ENCODE measurements at regions of chr17 and their contacts with region 1.

Region 1: DNA sequence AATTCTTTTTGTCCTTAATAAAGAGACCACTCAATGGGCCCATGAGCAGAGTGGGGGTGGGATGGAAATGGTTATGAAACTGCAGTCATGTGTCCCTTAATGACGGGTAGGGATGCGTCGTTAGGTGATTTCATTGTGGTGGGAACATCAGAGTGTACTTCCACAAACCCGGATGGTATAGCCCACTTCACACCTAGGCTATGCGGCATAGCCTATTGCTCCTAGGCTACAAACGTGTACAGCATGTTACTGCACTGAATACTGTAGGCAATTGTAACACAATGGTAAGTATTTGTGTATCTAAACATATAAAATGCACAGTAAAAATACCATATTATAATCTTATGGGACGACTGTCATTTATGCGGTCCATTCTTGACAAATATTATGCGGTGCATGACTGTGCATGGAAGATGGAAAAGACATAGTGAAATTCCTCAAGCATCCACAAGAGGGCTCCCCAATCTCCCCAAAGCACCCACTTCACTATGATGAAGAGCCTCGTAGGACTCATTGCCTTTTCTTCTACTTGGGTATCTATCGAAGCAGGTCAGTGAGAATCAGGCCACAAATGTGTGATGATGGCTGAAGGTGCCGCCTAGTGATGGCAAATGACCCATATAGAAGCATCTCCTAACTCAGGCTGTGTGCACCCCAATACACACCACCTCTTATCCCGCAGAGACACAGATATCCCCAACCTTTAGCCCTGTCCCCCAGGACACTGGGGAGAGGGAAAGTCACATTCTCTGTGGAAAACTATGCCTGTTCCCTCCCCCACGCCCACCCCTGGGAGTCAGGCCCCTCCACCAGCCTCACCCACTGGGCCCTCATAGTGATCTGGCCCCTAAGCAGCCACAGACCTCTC is 43.5 kb downstream of the TBX21 start:
- DNase-seq: peak; percentile 40
- H3K4me3 ChIP-seq: no peak overlapping the region
- H3K27ac ChIP-seq: no peak overlapping the region
- H3K4me1 ChIP-seq: no peaks in the 10 kb centered on the region
- H3K27me3 ChIP-seq: peaks cover 13 to 22% of the 10 kb centered on the region in 2 experiments
- CTCF ChIP-seq: peak; percentile 57 to 72
- POLR2A ChIP-seq: no peak

Region 2: DNA sequence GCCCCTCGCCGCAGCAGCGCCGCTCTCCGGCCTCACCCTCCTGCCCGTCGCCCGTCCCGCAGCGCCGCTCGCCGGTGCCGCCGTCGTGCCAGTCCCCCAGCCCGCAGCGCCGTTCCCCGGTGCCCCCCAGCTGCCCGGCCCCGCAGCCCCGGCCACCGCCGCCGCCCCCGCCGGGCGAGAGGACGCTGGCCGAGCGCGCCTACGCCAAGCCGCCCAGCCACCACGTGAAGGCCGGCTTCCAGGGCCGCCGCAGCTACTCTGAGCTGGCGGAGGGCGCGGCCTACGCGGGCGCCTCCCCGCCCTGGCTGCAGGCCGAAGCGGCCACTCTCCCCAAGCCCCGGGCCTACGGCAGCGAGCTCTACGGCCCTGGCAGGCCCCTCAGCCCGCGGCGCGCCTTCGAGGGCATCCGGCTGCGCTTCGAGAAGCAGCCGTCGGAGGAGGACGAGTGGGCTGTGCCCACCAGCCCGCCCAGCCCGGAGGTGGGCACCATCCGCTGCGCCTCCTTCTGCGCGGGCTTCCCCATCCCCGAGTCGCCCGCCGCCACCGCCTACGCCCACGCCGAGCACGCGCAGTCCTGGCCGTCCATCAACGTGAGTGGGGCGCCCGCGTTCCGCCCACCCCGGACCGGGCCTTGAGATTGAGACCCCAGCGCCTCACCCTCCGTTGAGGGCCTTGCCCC is 67.6 kb before region 1 on chr17:
- CTCF ChIA-PET with region 1: no interaction called
- POLR2A ChIA-PET with region 1: no interaction called
- dilution Hi-C with region 1: no loop called
- intact Hi-C with region 1: no loop called
- DNase-seq: no peak
- H3K4me3 ChIP-seq: no peak overlapping the region
- H3K27ac ChIP-seq: no peak overlapping the region
- H3K4me1 ChIP-seq: no peaks in the 10 kb centered on the region
- H3K27me3 ChIP-seq: no peaks in the 10 kb centered on the region
- CTCF ChIP-seq: no peak
- POLR2A ChIP-seq: no peak

Region 3: GRCh38 chr17:47802341-47803022 is 25.9 kb after region 1 on chr17:
- CTCF ChIA-PET with region 1: interaction called, 10 read pairs
- POLR2A ChIA-PET with region 1: no interaction called
- dilution Hi-C with region 1: no loop called
- intact Hi-C with region 1: loop called (anchors 1 kb)
- DNase-seq: peak; percentile 36
- H3K4me3 ChIP-seq: no peak overlapping the region
- H3K27ac ChIP-seq: no peak overlapping the region
- H3K4me1 ChIP-seq: no peaks in the 10 kb centered on the region
- H3K27me3 ChIP-seq: peaks cover 0 to 2% of the 10 kb centered on the region in 2 experiments
- CTCF ChIP-seq: peak; percentile 47 to 71
- POLR2A ChIP-seq: no peak

Region 4: GRCh38 chr17:47821424-47822391 is 45.1 kb after region 1 on chr17 and contains the start of gene OSBPL7:
- CTCF ChIA-PET with region 1: no interaction called
- POLR2A ChIA-PET with region 1: no interaction called
- dilution Hi-C with region 1: no loop called
- intact Hi-C with region 1: loop called (anchors 1 kb)
- DNase-seq: peak; percentile 94
- H3K4me3 ChIP-seq: peak within 1 kb of the TSS; percentile 40 to 72 (median 47)
- H3K27ac ChIP-seq: peak within 1 kb of the TSS; percentile 48
- H3K4me1 ChIP-seq: peaks cover 17% of the 10 kb centered on the region
- H3K27me3 ChIP-seq: no peaks in the 10 kb centered on the region
- CTCF ChIP-seq: peak; percentile 13 to 18
- POLR2A ChIP-seq: peak; percentile 83
- total RNA-seq, gene OSBPL7: 26.7 and 29.1 TPM in 2 replicates

Region 5: GRCh38 chr17:47831003-47831933 is 54.7 kb after region 1 on chr17 and contains the starts of genes LRRC46 and MRPL10:
- CTCF ChIA-PET with region 1: interaction called, 4 read pairs
- POLR2A ChIA-PET with region 1: no interaction called
- dilution Hi-C with region 1: no loop called
- intact Hi-C with region 1: loop called (anchors 2 kb)
- DNase-seq: peak; percentile 95
- H3K4me3 ChIP-seq: peak within 1 kb of the TSS; percentile 58 to 78 (median 71)
- H3K27ac ChIP-seq: peak within 1 kb of the TSS; percentile 45
- H3K4me1 ChIP-seq: peaks cover 28% of the 10 kb centered on the region
- H3K27me3 ChIP-seq: no peaks in the 10 kb centered on the region
- CTCF ChIP-seq: peak; percentile 35 to 38
- POLR2A ChIP-seq: peak; percentile 99
- total RNA-seq, gene LRRC46: 0.42 TPM in 1 of 2 replicates, not detected in the other
- total RNA-seq, gene MRPL10: 38.5 and 43.4 TPM in 2 replicates

Region 6: DNA sequence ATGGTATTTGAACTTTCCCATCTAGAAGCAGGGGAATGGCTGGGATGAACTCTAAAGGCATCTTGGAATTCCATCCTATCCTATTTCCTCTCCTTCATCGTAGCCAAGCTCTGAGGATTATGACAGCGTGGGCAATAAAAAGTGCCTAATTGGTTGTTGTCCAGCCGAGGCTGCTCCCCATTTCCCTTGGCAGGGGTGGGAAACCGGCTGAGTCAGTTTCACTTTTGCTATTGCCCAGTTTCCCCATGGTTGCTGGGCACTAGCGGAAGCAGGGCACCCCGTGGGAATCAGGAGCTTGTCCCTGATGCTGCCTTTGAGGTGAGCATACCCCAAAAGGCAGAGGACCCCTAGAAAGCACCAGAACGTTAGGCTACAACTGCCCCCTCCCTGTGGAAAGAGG is 105.7 kb after region 1 on chr17:
- CTCF ChIA-PET with region 1: no interaction called
- POLR2A ChIA-PET with region 1: no interaction called
- dilution Hi-C with region 1: no loop called
- intact Hi-C with region 1: no loop called
- DNase-seq: peak; percentile 38
- H3K4me3 ChIP-seq: no peak overlapping the region
- H3K27ac ChIP-seq: no peak overlapping the region
- H3K4me1 ChIP-seq: peaks cover 7% of the 10 kb centered on the region
- H3K27me3 ChIP-seq: peaks cover 3 to 6% of the 10 kb centered on the region in 2 experiments
- CTCF ChIP-seq: no peak
- POLR2A ChIP-seq: no peak